ENCODE measurements at regions of chr14 and their contacts with region 1.

Region 1: GRCh38 chr14:22556990-22557623 is 31.9 kb downstream of the DAD1 start:
- DNase-seq: peak; percentile 33
- H3K4me3 ChIP-seq: peak overlapping the region; percentile 43
- H3K27ac ChIP-seq: peak overlapping the region; percentile 57
- H3K27me3 ChIP-seq: no peaks in the 10 kb centered on the region
- CTCF ChIP-seq: peak; percentile 92

Region 2: GRCh38 chr14:22122227-22122818 is 434.8 kb before region 1 on chr14:
- CTCF ChIA-PET with region 1: no interaction called
- POLR2A ChIA-PET with region 1: no interaction called
- DNase-seq: no peak
- H3K4me3 ChIP-seq: no peak overlapping the region
- H3K27ac ChIP-seq: no peak overlapping the region
- H3K27me3 ChIP-seq: no peaks in the 10 kb centered on the region
- CTCF ChIP-seq: peak; percentile 41

Region 3: GRCh38 chr14:22531451-22532344 is 25.4 kb before region 1 on chr14:
- CTCF ChIA-PET with region 1: interaction called, 59 read pairs
- POLR2A ChIA-PET with region 1: no interaction called
- DNase-seq: no peak
- H3K4me3 ChIP-seq: no peak overlapping the region
- H3K27ac ChIP-seq: no peak overlapping the region
- H3K27me3 ChIP-seq: no peaks in the 10 kb centered on the region
- CTCF ChIP-seq: no peak

Region 4: GRCh38 chr14:22653012-22653621 is 96.0 kb after region 1 on chr14:
- CTCF ChIA-PET with region 1: interaction called, 37 read pairs
- POLR2A ChIA-PET with region 1: no interaction called
- DNase-seq: peak; percentile 57
- H3K4me3 ChIP-seq: no peak overlapping the region
- H3K27ac ChIP-seq: no peak overlapping the region
- H3K27me3 ChIP-seq: peaks cover 2% of the 10 kb centered on the region
- CTCF ChIP-seq: peak; percentile 98

Region 5: GRCh38 chr14:22836301-22837113 is 279.4 kb after region 1 on chr14 and contains the start of gene MMP14:
- CTCF ChIA-PET with region 1: interaction called, 22 read pairs
- POLR2A ChIA-PET with region 1: no interaction called
- DNase-seq: no peak
- H3K4me3 ChIP-seq: peak within 1 kb of the TSS; percentile 89
- H3K27ac ChIP-seq: peak within 1 kb of the TSS; percentile 94
- H3K27me3 ChIP-seq: no peaks in the 10 kb centered on the region
- CTCF ChIP-seq: peak; percentile 65
- polyA plus RNA-seq, gene MMP14: 365 and 448 TPM in 2 replicates

Region 6: GRCh38 chr14:22900081-22900799 is 343.1 kb after region 1 on chr14:
- CTCF ChIA-PET with region 1: interaction called, 85 read pairs
- POLR2A ChIA-PET with region 1: no interaction called
- DNase-seq: peak; percentile 53
- H3K4me3 ChIP-seq: no peak overlapping the region
- H3K27ac ChIP-seq: no peak overlapping the region
- H3K27me3 ChIP-seq: no peaks in the 10 kb centered on the region
- CTCF ChIP-seq: peak; percentile 66

Region 7: DNA sequence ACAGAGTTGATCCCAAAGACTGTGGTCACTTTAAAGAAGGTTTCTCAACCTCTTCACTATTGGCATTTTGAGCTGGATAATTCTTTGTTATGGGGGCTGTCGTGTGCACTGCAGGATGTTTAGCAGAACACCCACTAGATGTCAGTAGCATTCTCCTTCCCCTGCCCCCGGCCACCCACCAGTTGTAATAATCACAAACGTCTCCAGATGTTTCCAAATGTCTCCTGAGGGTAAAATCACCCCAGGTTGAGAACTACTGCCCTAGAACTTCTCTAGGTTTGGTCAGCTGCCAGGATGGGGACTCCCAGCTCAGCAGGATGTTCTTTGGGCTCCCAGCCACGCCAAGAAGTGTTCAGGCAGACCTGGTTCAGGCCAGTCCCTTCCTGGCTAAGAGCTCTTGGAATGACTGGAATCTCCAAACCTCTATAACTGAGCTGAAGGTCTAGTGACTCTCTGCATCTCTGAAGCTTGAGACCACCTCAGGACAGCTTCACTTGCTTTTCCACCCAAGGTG is 437.7 kb after region 1 on chr14:
- CTCF ChIA-PET with region 1: interaction called, 18 read pairs
- POLR2A ChIA-PET with region 1: no interaction called
- DNase-seq: no peak
- H3K4me3 ChIP-seq: no peak overlapping the region
- H3K27ac ChIP-seq: no peak overlapping the region
- H3K27me3 ChIP-seq: no peaks in the 10 kb centered on the region
- CTCF ChIP-seq: peak; percentile 78

Region 8: DNA sequence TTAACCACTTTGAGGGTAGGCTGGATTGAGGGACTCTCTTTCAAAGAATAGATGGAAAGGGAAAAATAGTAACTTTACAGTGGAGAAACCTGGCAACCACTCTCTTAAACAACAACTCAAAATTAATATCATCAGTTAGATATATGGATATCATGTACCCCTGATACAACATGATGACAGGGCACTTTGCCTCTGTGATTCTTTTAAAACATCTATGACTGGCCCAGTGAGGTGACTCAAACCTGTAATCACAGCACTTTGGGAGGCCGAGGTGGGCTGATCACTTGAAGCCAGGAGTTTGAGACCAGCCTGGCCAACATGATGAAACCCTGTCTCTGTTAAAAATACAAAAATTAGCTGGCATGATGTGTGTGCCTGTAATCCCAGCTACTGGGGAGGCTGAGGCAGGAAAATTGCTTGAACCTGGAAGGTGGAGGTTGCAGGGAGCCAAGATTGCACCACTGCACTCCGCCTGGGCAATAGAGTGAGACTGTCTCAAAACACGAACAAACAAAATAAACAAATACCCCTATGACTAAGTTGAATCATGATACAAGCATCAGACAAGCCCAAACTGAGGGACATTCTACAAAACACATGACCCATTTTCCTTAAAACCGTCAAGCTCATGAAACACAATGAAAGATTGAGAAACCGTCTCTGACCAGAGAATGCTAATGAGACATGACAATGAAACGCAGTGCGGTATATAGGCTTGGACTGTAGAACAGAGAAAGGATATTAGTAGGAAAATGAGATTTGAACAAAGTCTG is 652.7 kb after region 1 on chr14:
- CTCF ChIA-PET with region 1: no interaction called
- POLR2A ChIA-PET with region 1: no interaction called
- DNase-seq: no peak
- H3K4me3 ChIP-seq: no peak overlapping the region
- H3K27ac ChIP-seq: no peak overlapping the region
- H3K27me3 ChIP-seq: peaks cover 11% of the 10 kb centered on the region
- CTCF ChIP-seq: no peak

Measured in AG04450 (cell line).